Testis (tissue), 5 donors: ENCODE measurements at regions of chr10 and their contacts with region 1.

Region 1: DNA sequence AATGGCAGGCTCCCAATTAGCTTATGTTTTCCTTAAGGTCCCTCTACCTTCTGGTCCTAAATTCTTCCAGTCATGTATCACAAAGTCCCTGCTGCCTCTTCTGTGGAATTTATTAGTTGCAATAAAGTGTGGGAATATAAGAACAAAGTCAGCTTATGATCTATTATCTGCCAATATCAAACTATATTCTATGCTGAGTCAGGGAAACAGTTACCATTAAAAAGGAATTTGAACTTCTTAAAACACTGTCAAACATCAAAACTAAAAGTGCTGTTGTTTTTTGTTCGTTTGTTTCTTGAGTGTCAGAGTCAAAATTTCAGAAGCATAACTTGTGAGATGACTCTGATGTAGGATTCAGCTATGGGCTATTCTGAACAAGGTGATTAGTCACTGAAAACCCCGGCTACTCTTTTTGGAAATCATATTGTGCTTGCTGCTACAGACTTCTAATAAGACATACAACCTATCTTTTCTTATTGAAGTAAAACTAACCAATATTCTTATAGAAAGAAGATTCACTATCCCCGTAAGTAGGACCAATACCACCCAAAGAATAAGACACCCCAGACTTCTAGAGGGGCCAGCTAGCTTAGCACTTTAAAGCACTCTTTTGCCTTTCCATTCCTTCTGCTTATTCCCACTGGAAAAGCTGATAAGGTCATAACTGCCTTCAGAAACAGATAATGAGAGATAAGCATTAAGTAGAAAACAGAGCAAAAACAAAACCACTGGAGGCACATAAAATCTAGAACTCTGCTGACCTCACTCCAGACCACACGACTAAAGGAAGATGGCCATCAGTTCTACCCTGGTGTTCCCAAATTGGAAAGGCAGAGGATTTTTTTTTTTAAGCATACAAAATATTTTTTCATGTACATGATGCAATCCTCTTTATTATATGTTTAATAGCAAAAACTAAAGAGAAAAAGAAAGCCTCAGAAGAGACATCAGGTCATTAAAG is 370.6 kb downstream of the PARD3 start:
- DNase-seq: no peak
- H3K4me3 ChIP-seq: no peak overlapping the region
- H3K27ac ChIP-seq: no peak overlapping the region
- H3K4me1 ChIP-seq: no peaks in the 10 kb centered on the region
- H3K27me3 ChIP-seq: no peaks in the 10 kb centered on the region
- CTCF ChIP-seq: no peak
- POLR2A ChIP-seq: no peak

Region 2: GRCh38 chr10:34049887-34050286 is 394.6 kb before region 1 on chr10:
- intact Hi-C with region 1: loop called (anchors 5 kb)
- DNase-seq: no peak
- H3K4me3 ChIP-seq: no peak overlapping the region
- H3K27ac ChIP-seq: no peak overlapping the region
- H3K4me1 ChIP-seq: no peaks in the 10 kb centered on the region
- H3K27me3 ChIP-seq: no peaks in the 10 kb centered on the region
- CTCF ChIP-seq: no peak
- POLR2A ChIP-seq: no peak

Region 3: GRCh38 chr10:34236931-34237330 is 207.6 kb before region 1 on chr10:
- intact Hi-C with region 1: no loop called
- DNase-seq: no peak
- H3K4me3 ChIP-seq: no peak overlapping the region
- H3K27ac ChIP-seq: no peak overlapping the region
- H3K4me1 ChIP-seq: peaks cover 5% of the 10 kb centered on the region
- H3K27me3 ChIP-seq: no peaks in the 10 kb centered on the region
- CTCF ChIP-seq: no peak
- POLR2A ChIP-seq: no peak

Region 4: GRCh38 chr10:34305190-34305589 is 139.3 kb before region 1 on chr10:
- intact Hi-C with region 1: no loop called
- DNase-seq: no peak
- H3K4me3 ChIP-seq: no peak overlapping the region
- H3K27ac ChIP-seq: no peak overlapping the region
- H3K4me1 ChIP-seq: no peaks in the 10 kb centered on the region
- H3K27me3 ChIP-seq: no peaks in the 10 kb centered on the region
- CTCF ChIP-seq: no peak
- POLR2A ChIP-seq: no peak